Right ventricle myocardium superior (tissue), 1 donor: ENCODE measurements at regions of chr5 and their contacts with region 1.

Region 1: DNA sequence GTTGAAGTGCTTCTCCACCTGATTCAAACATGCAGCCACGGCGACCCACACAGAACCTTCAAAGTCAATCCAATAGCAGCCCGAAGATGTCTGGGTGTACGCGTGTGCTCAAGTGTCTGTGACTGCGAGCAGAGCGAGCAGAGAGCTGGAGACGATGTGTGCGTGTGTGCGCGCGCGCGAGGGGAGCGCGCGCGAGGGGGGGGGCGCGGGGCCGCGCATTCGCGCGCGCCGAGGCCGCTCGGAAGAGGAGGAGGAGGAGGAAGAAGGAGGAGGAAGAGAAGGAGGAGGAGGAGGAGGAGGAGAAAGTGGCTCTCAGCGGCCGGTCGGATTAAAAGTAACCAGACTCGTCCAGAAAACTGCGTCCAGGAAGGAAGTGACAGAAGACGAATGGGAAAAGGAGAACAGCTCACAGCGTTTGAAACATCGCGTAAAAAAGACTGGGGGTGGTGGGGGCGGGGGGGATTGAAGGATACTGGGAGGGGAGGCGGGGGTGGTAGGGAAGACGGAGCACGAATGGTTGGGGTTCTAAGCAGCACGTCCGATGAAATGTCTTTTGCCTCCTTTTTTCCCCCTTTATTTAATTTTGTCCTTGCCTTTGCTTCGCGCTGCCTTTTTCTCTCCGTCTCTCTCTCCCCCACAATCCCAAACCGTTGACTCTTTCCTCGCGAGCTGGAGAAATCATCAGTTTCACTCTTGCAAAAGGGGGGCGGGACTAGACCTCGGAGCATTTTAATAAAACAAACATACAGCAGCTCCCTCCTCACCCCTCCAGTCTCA is at the start of gene MEF2C:
- DNase-seq: peak; percentile 83
- ATAC-seq: peak; percentile 85
- total RNA-seq, gene MEF2C: 52.3 TPM

Region 2: DNA sequence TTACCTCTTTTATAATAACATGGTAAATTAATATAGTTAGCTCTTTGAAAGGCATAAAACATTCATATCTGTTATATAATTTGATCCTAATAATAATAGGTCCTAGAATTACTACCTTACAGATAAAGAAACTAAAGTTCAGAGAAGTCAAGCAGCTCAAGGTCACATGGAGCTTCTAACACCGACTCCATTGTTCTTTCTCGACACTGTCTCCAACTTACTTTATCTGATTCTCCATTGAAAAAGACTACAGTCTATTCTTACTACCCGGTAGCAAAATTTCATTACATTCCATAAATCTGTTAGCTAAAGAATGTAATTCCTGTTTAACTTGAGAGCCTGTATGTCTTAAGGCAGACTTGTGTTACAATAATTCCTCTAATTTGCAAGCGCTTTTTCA is 518.3 kb before region 1 on chr5:
- intact Hi-C with region 1: no loop called
- DNase-seq: no peak
- ATAC-seq: no peak

Region 3: DNA sequence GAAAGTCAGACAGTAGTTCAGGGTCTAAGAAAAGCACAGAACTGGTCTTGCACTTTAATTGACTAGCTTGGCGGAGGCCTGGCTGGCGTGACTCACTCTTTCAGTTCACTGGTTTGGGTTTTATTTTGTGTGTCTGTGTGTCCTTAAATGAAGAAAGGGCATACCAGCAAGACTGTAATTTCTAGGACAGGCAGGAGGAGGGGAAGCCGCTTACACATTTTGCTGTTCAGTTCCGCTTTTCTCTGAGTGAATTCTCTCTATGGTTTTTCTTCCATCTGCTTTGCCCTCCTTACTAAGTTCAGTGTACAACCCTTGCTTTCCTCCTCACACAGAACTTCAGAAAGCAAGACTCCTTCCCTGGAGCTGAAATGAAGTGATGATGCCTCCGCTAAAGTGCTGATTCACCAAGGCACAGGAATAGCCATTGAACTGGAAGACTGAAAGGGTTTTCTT is 151.0 kb before region 1 on chr5:
- intact Hi-C with region 1: loop called (anchors 5 kb)
- DNase-seq: peak; percentile 53
- ATAC-seq: peak; percentile 26

Region 4: DNA sequence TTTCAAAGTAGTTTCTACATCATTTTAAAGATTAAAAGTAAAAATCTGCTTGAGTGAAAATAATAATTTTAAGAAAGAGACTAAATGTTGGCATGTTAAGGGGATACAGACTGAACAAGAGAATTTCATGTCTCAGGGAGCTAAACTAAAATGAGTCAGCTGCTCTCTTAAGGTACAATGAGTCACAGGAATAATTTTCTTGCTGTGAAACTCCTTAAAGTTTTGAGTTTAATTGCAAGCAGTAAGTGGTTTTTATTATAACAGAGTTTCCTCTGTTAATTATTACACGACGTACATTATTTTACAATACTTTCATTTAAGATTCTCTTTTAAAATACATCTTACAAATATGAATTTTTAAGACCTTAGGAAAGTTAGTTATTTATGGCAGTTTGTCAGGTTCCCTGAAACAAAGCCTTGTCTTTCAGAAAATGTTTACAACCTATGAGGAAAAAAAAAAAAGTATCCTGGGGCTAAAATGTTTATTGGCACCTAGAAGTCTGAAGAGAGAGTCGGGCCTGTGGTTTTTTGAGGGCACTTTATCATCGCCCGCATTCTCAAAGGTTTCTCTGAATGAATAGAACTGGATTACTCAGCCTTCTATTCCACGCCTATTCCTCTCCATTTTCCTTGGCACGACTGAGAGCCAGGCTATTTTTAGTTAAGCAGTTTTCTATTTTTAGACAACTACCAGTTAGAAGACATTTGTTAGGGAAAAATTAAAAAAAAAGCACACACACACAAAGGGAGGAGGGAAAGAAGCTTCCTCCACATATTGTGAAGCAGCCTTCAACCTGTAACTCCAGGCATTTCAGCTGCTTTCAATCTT is 97.6 kb before region 1 on chr5:
- intact Hi-C with region 1: loop called (anchors 5 kb)
- DNase-seq: no peak
- ATAC-seq: peak; percentile 93

Region 5: GRCh38 chr5:88826646-88827585 is 56.3 kb before region 1 on chr5:
- intact Hi-C with region 1: loop called (anchors 5 kb)
- DNase-seq: peak; percentile 48
- ATAC-seq: peak; percentile 66

Region 6: DNA sequence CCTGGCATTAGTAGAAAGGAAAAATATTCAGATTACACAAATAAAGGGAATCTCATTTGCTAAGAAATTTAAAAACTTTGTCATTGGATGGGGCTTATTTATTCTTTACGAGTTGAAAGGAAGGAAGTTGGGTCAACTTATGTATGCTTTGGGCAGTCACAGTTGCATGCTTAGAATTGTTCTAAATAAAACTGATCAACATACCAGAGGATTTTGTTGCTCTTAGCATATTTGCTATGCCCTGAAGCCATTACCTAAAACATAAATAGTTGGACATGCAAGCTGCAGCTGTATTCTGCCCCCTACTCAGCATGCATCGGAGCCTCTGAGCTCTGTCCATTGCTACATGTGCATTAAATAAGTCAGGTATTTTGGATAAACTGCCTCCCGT is 172.4 kb after region 1 on chr5:
- intact Hi-C with region 1: no loop called
- DNase-seq: no peak
- ATAC-seq: no peak